A549 (cell line): ENCODE measurements at regions of chr16 and their contacts with region 1.

Region 1: DNA sequence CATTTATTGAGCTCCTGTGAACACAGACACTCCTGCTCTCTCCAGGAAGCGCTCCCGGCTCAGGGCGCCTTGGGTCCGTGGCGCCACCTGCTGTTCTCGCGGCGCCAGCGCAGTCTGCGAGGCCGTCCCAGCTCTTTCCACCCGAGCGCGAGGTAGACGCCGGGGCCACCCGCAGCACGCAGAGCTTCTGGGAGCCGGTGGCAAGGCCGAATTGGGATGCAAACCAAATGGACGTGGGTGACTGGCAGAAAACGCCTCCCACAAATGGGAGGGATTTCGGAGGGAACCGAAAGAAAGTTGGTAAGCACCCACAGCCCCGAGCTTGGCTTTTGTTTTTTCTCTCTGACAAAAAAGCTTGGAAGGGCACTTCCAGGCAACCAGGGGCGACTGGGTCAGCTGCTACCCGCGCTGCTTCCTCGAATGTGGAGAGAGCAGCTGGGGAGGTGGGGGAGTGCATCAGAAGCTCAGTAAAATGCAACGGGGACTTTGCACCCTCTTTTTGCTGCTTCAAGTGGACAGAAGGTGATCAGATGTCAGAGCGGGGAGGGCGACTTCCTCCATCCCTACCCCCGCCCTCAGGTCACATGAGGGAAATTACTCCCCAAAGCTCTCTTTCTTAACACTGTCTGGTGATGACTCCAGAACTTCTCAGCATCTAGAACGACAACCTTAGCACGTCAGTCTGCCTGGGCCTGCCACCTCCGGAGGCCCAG is 13.5 kb upstream of the N4BP1 start:
- DNase-seq: peak; percentile 84 to 85
- ATAC-seq: peak; percentile 97 to 99
- H3K4me3 ChIP-seq: peak overlapping the region; percentile 46
- H3K27ac ChIP-seq: peak overlapping the region; percentile 66 to 84
- H3K4me1 ChIP-seq: peaks cover 6% of the 10 kb centered on the region; the same call in 1 of the 3 replicates
- CTCF ChIP-seq: peak; percentile 91
- EP300 ChIP-seq: no peak
- POLR2A ChIP-seq: no peak
- RAD21 ChIP-seq: peak; percentile 89 to 91

Region 2: GRCh38 chr16:48235556-48236136 is 387.8 kb before region 1 on chr16:
- CTCF ChIA-PET with region 1: interaction called, 10 read pairs
- POLR2A ChIA-PET with region 1: interaction called, 4 read pairs
- DNase-seq: peak in 1 of 2 experiments; percentile 27
- ATAC-seq: peak; percentile 37 to 65; a peak in 4 of 6 replicates
- H3K4me3 ChIP-seq: no peak overlapping the region
- H3K27ac ChIP-seq: peak overlapping the region; percentile 24 to 44; a peak in 5 of 6 replicates
- H3K4me1 ChIP-seq: peaks cover 33% of the 10 kb centered on the region
- CTCF ChIP-seq: no peak
- EP300 ChIP-seq: no peak
- POLR2A ChIP-seq: no peak
- RAD21 ChIP-seq: no peak

Region 3: DNA sequence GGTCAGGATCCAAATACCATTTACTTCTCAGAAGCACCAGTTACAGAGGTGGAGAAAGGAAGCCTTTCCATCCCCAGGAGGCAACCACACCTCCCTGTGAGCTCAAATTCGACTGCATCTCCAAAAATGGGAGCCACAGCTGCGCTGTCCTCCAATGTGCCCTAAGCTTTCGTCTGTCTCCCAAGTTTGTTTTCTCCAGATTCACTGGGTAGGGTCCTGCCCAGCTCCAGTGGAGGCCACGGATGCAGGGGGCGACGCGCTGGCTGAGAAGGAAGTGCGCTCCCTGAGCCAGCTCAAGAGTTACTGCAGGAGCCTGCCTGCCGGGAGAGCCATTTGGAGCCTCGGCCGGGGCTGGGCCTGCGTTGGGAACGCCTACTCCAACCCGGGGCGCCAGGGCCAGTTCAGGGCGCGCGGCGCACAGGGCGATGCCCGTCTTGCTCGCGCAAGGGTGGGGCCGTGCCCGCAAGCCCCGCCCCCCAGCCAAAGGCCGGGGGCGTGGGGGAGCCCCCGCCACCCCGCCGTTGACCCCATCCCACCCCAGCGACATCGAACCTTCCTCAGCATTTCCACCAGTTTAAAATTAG is 257.8 kb before region 1 on chr16:
- CTCF ChIA-PET with region 1: interaction called, 14 read pairs
- POLR2A ChIA-PET with region 1: interaction called, 5 read pairs
- DNase-seq: peak; percentile 71 to 93
- ATAC-seq: peak; percentile 95 to 99
- H3K4me3 ChIP-seq: peak overlapping the region; percentile 53
- H3K27ac ChIP-seq: peak overlapping the region; percentile 90 to 92
- H3K4me1 ChIP-seq: peaks cover 46% of the 10 kb centered on the region
- CTCF ChIP-seq: no peak
- EP300 ChIP-seq: no peak
- POLR2A ChIP-seq: peak; percentile 80
- RAD21 ChIP-seq: peak in 1 of 2 experiments; percentile 9; a peak in 1 of 5 replicates

Region 4: GRCh38 chr16:48542020-48542473 is 81.4 kb before region 1 on chr16:
- CTCF ChIA-PET with region 1: interaction called, 34 read pairs
- POLR2A ChIA-PET with region 1: no interaction called
- DNase-seq: peak; percentile 56 to 66
- ATAC-seq: peak; percentile 85 to 89
- H3K4me3 ChIP-seq: no peak overlapping the region
- H3K27ac ChIP-seq: peak overlapping the region in 1 of 2 experiments; percentile 30; a peak in 2 of 6 replicates
- H3K4me1 ChIP-seq: 0 out of 3 replicates have a peak, but pooled peaks cover 5% of the 10 kb centered on the region
- CTCF ChIP-seq: peak; percentile 75
- EP300 ChIP-seq: no peak
- POLR2A ChIP-seq: no peak
- RAD21 ChIP-seq: peak; percentile 89

Region 5: GRCh38 chr16:48590476-48590875 is 33.0 kb before region 1 on chr16:
- CTCF ChIA-PET with region 1: interaction called, 10 read pairs
- POLR2A ChIA-PET with region 1: no interaction called
- DNase-seq: no peak
- ATAC-seq: no peak
- H3K4me3 ChIP-seq: no peak overlapping the region
- H3K27ac ChIP-seq: no peak overlapping the region
- H3K4me1 ChIP-seq: no peaks in the 10 kb centered on the region
- CTCF ChIP-seq: no peak
- EP300 ChIP-seq: no peak
- POLR2A ChIP-seq: no peak
- RAD21 ChIP-seq: no peak